A673 (cell line): ENCODE measurements at regions of chr9 and their contacts with region 1.

Region 1: DNA sequence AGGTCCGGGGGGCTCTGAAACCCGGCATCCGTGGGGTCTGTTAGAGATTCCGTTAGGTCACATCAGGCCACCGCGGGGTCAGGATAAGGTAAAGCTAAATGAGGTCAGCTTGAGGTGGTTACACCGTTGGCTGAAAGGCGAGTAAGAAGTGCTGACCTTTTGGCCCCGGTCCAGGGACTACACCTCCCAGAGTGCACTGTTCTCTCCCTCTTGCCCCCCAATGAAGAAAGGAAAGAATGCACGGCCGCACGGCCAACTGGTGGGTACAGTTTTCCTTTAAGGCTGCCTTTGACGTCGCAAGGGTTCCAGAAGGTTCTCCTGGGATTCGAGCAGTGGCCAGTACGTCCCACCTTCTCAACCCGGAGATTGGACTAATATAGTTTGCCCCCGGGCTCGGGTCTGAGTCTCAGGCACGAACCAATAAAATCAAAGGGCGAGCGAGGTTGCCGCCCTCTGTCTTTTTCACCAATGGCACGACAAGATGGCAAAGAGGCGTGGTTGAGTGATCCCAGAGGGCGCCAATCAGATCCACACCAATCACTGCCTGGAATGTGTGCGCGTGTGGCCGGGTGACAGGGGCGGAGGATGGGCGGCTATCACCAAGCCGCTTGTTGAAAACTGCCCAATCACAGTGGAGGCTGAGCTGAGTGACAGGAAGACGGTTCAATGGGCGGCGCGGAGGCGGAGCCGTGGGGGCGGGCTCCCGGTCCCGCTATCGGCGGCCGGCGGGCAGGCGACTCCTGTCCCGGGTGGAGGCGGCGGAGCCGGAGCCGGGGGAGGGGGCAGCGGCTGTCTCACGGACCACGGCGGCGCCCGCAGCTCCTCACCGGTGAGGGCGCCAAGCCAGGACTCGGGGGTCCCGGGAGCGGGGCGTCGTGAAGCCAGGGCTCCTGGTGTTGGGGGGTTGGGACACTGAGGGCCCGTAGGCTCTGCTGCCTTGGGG is at the start of gene DNAJB5:
- DNase-seq: peak; percentile 100
- H3K4me3 ChIP-seq: peak within 1 kb of the TSS; percentile 85
- H3K27ac ChIP-seq: peak within 1 kb of the TSS; percentile 86
- H3K4me1 ChIP-seq: peaks cover 61% of the 10 kb centered on the region
- H3K27me3 ChIP-seq: no peaks in the 10 kb centered on the region
- CTCF ChIP-seq: no peak
- total RNA-seq, gene DNAJB5: 11.9 and 13.0 TPM in 2 replicates

Region 2: GRCh38 chr9:34971146-34971811 is 18.0 kb before region 1 on chr9:
- CTCF ChIA-PET with region 1: no interaction called
- POLR2A ChIA-PET with region 1: no interaction called
- intact Hi-C with region 1: no loop called
- DNase-seq: no peak
- H3K4me3 ChIP-seq: no peak overlapping the region
- H3K27ac ChIP-seq: no peak overlapping the region
- H3K4me1 ChIP-seq: no peaks in the 10 kb centered on the region
- H3K27me3 ChIP-seq: peaks cover 22% of the 10 kb centered on the region
- CTCF ChIP-seq: no peak

Region 3: DNA sequence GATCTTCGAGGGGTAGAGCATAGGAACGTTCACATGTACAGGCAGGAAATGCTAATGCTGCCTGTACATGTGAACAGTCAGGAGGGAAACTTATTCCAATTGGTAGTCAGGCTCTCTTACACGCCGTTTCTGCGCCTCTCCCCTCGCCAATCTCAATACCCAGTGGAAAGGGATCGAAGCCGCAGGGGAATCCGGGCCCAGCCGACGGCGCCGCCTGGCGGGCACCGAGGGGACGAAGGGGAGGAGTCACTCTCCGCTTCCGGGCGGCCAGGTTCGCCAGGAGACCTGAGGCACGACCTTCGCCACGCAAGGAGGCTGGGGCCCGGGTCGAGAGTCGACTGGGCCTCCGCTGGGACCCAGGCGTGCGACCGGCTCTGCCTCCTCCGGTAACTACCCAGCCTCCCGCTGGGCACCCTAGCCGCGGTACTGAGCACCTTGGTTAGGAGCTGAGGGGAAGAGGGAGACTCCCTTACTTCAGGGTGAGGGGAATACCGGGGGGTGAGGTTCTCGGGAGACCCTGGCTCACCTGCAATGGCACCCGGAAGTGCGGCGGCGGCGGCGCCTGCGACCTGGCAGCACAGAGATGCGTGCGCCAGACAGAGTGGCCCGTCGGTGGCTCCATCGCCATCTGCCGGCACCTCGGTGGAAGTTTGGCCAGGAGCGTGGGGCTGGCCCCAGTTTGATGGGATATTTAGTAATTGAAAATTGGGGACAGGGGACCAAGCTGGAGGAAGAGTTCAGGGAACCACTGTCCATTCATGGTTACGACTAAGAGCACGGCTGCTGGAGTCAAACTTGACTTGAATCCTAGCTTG is 107.0 kb after region 1 on chr9 and contains the start of gene PIGO:
- CTCF ChIA-PET with region 1: no interaction called
- POLR2A ChIA-PET with region 1: no interaction called
- intact Hi-C with region 1: loop called (anchors 5 kb)
- DNase-seq: peak; percentile 90
- H3K4me3 ChIP-seq: peak within 1 kb of the TSS; percentile 96
- H3K27ac ChIP-seq: peak within 1 kb of the TSS; percentile 99
- H3K4me1 ChIP-seq: peaks cover 7% of the 10 kb centered on the region
- H3K27me3 ChIP-seq: no peaks in the 10 kb centered on the region
- CTCF ChIP-seq: peak; percentile 77
- total RNA-seq, gene PIGO: 32.9 and 34.3 TPM in 2 replicates

Region 4: GRCh38 chr9:35495984-35496383 is 506.7 kb after region 1 on chr9:
- CTCF ChIA-PET with region 1: no interaction called
- POLR2A ChIA-PET with region 1: no interaction called
- intact Hi-C with region 1: no loop called
- DNase-seq: no peak
- H3K4me3 ChIP-seq: no peak overlapping the region
- H3K27ac ChIP-seq: no peak overlapping the region
- H3K4me1 ChIP-seq: peaks cover 11% of the 10 kb centered on the region
- H3K27me3 ChIP-seq: no peaks in the 10 kb centered on the region
- CTCF ChIP-seq: no peak